ENCODE measurements at regions of chr19 and their contacts with region 1.

Region 1: GRCh38 chr19:17718947-17719711 is at the start of gene MAP1S:
- DNase-seq: peak; percentile 66
- H3K4me3 Mint-ChIP-seq: peak within 1 kb of the TSS; percentile 91
- H3K27ac Mint-ChIP-seq: peak within 1 kb of the TSS; percentile 89
- H3K4me1 Mint-ChIP-seq: peaks cover 43% of the 10 kb centered on the region
- H3K27me3 Mint-ChIP-seq: peaks cover 2% of the 10 kb centered on the region
- total RNA-seq, gene MAP1S: 81.7 and 83.7 TPM in 2 replicates

Region 2: GRCh38 chr19:17555480-17555928 is 163.6 kb before region 1 on chr19 and contains the start of gene COLGALT1:
- intact Hi-C with region 1: loop called (anchors 1 kb)
- DNase-seq: peak; percentile 97
- H3K4me3 Mint-ChIP-seq: peak within 1 kb of the TSS; percentile 86
- H3K27ac Mint-ChIP-seq: peak within 1 kb of the TSS; percentile 70
- H3K4me1 Mint-ChIP-seq: peaks cover 15% of the 10 kb centered on the region
- H3K27me3 Mint-ChIP-seq: no peaks in the 10 kb centered on the region
- total RNA-seq, gene COLGALT1: 115 and 117 TPM in 2 replicates

Region 3: GRCh38 chr19:17703824-17704463 is 15.2 kb before region 1 on chr19:
- intact Hi-C with region 1: no loop called
- DNase-seq: peak; percentile 50
- H3K4me3 Mint-ChIP-seq: no peak overlapping the region
- H3K27ac Mint-ChIP-seq: no peak overlapping the region
- H3K4me1 Mint-ChIP-seq: no peaks in the 10 kb centered on the region
- H3K27me3 Mint-ChIP-seq: peaks cover 2% of the 10 kb centered on the region

Region 4: GRCh38 chr19:17784201-17785008 is 65.3 kb after region 1 on chr19:
- intact Hi-C with region 1: loop called (anchors 2 kb)
- DNase-seq: peak; percentile 56
- H3K4me3 Mint-ChIP-seq: no peak overlapping the region
- H3K27ac Mint-ChIP-seq: peak overlapping the region; percentile 63
- H3K4me1 Mint-ChIP-seq: peaks cover 17% of the 10 kb centered on the region
- H3K27me3 Mint-ChIP-seq: no peaks in the 10 kb centered on the region

Measured in activated T-helper 1 cell treated with anti-CD3 and anti-CD28 coated beads, Interleukin-12 subunit alpha, Interleukin-12 subunit beta, Interleukin-2, Interleukin-4 antibody, amounts not matched to agents 30 ng/mL and 10 ng/mL and 1 ng/mL, durations not matched to agents 14 hours and 24 hours and 36 hours (primary cell).